ENCODE measurements at regions of chr13 and their contacts with region 1.

Region 1: GRCh38 chr13:114281351-114282040 is at the start of gene UPF3A:
- DNase-seq: peak; percentile 63 to 94
- H3K4me3 ChIP-seq: peak within 1 kb of the TSS; percentile 70 to 94 (median 88)
- H3K27ac ChIP-seq: peak within 1 kb of the TSS; percentile 98
- H3K4me1 ChIP-seq: peaks cover 0 to 8% (median 3%) of the 10 kb centered on the region in 4 experiments; a peak in 4 of 7 replicates
- H3K27me3 ChIP-seq: no peaks in the 10 kb centered on the region
- CTCF ChIP-seq: no peak
- EP300 ChIP-seq: peak in 1 of 2 experiments; percentile 46; a peak in 1 of 3 replicates
- POLR2A ChIP-seq: peak; percentile 86 to 94
- RAD21 ChIP-seq: no peak
- total RNA-seq, gene UPF3A: 56.6 and 58.2 TPM in 2 replicates

Region 2: GRCh38 chr13:114234645-114235421 is 46.7 kb before region 1 on chr13 and contains the start of gene CDC16:
- CTCF ChIA-PET with region 1: no interaction called
- POLR2A ChIA-PET with region 1: interaction called, 19 read pairs
- DNase-seq: peak; percentile 80 to 89
- H3K4me3 ChIP-seq: peak within 1 kb of the TSS; percentile 76 to 88 (median 80)
- H3K27ac ChIP-seq: 0 out of 2 replicates have a peak within 1 kb of the TSS, but pooled peaks have one; percentile 11
- H3K4me1 ChIP-seq: peaks cover 8 to 14% (median 9%) of the 10 kb centered on the region in 4 experiments; a peak in 5 of 7 replicates
- H3K27me3 ChIP-seq: no peaks in the 10 kb centered on the region
- CTCF ChIP-seq: peak in 1 of 3 experiments; percentile 2; a peak in 1 of 4 replicates
- EP300 ChIP-seq: peak in 1 of 2 experiments; percentile 48; a peak in 1 of 3 replicates
- POLR2A ChIP-seq: peak; percentile 30 to 60; a peak in 1 of 3 replicates
- RAD21 ChIP-seq: no peak; a peak in 1 of 4 replicates
- total RNA-seq, gene CDC16: 78.7 and 83.4 TPM in 2 replicates

Region 3: GRCh38 chr13:114248011-114248410 is 33.5 kb before region 1 on chr13:
- CTCF ChIA-PET with region 1: no interaction called
- POLR2A ChIA-PET with region 1: interaction called, 11 read pairs
- DNase-seq: no peak
- H3K4me3 ChIP-seq: no peak overlapping the region
- H3K27ac ChIP-seq: no peak overlapping the region
- H3K4me1 ChIP-seq: no peaks in the 10 kb centered on the region
- H3K27me3 ChIP-seq: no peaks in the 10 kb centered on the region
- CTCF ChIP-seq: no peak
- EP300 ChIP-seq: no peak
- POLR2A ChIP-seq: no peak
- RAD21 ChIP-seq: no peak

Region 4: GRCh38 chr13:114259974-114260373 is 21.5 kb before region 1 on chr13:
- CTCF ChIA-PET with region 1: no interaction called
- POLR2A ChIA-PET with region 1: interaction called, 35 read pairs
- DNase-seq: no peak
- H3K4me3 ChIP-seq: no peak overlapping the region
- H3K27ac ChIP-seq: no peak overlapping the region
- H3K4me1 ChIP-seq: peaks cover 0 to 8% (median 2%) of the 10 kb centered on the region in 4 experiments; a peak in 2 of 7 replicates
- H3K27me3 ChIP-seq: no peaks in the 10 kb centered on the region
- CTCF ChIP-seq: no peak
- EP300 ChIP-seq: no peak
- POLR2A ChIP-seq: no peak
- RAD21 ChIP-seq: no peak

Region 5: GRCh38 chr13:114268344-114269280 is 12.9 kb before region 1 on chr13:
- CTCF ChIA-PET with region 1: interaction called, 3 read pairs
- POLR2A ChIA-PET with region 1: interaction called, 21 read pairs
- DNase-seq: no peak
- H3K4me3 ChIP-seq: no peak overlapping the region
- H3K27ac ChIP-seq: no peak overlapping the region
- H3K4me1 ChIP-seq: no peaks in the 10 kb centered on the region
- H3K27me3 ChIP-seq: no peaks in the 10 kb centered on the region
- CTCF ChIP-seq: no peak
- EP300 ChIP-seq: no peak
- POLR2A ChIP-seq: no peak
- RAD21 ChIP-seq: no peak

Measured in H1 (cell line).